Activated CD4-positive, alpha-beta memory T cell treated with anti-CD3 and anti-CD28 coated beads for 36 hours (primary cell): ENCODE measurements at regions of chr7 and their contacts with region 1.

Region 1: DNA sequence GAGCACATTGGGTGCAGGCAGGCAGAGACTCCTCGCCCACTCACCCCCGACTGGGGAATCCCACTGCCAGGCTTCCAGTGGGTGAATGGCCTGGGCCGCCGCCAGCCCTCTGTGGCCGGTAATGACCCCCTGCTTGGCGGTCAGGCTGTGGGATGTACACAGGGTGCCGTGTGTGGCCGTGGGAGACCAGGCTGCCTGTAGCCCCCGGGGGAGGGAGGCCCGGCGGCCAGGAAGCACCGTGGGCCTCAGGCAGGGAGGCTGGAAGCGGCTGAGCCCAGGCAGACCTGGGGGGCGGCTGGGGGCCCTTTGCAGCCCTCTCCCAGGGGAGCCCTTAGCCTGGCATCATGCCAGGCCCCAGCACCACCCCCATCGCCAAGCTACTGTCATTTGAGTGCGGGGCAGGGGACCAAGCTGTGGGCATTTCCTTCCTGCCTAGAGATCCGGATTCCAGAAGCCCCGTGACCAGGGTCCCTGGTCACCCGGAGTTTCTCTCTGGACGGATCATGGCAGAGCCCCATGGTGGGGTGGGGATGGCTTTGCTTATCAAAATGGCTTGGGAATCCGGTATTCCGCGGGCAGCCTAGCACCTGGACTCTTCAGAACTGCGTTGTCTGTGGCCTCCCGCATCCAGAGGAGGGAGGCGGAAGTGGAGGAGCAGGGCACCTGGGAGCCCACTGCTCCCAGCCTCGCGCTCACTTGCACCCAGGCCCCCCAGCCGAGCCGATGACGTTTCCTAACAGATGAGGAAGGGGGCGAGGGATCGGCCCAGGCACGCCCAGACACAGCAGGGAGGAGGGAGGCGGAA is 1.1 kb downstream of the TTYH3 start:
- DNase-seq: peak; percentile 66
- H3K4me3 Mint-ChIP-seq: peak overlapping the region; percentile 87
- H3K27ac Mint-ChIP-seq: peak overlapping the region; percentile 60
- H3K4me1 Mint-ChIP-seq: peaks cover 15% of the 10 kb centered on the region
- H3K27me3 Mint-ChIP-seq: peaks cover 1% of the 10 kb centered on the region

Region 2: DNA sequence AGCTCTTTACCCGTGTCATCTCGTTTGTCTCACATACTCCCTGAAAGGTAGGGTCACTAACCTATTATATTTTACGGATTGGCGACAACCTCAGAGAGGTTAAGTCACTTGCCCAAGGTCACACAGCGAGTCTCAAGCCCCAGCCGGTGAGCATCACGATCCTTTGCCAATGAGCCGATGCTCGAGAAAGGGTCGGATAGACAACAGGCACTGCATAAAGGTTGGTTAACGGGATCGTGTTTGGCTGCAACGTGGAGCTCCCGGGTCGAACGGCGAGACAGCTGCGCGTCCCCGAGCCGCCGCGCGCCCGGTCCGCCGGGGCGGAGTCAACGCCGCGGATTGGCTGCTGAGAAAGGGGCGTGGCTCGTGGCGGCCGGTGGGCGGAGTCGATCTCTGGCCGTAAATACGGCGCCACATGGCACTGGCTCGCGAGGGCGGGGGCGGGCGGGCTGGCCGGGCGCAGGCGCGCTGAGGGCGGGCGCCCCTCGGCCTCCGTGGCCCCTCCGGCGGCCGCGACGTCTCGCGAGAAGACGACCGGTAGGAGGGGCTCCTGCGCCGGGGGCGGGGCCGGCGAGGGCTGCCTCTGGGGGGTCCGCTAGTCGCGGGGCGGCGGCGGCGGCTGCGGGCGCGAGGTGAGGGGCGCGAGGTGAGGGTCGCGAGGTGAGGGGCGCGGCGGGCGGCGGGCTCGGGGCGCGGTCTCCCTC is 229.8 kb before region 1 on chr7 and contains the start of gene CHST12:
- CTCF ChIA-PET with region 1: no interaction called
- POLR2A ChIA-PET with region 1: no interaction called
- intact Hi-C with region 1: loop called (anchors 5 kb)
- DNase-seq: peak; percentile 96
- H3K4me3 Mint-ChIP-seq: peak within 1 kb of the TSS; percentile 79
- H3K27ac Mint-ChIP-seq: no peak within 1 kb of the TSS
- H3K4me1 Mint-ChIP-seq: peaks cover 45% of the 10 kb centered on the region
- H3K27me3 Mint-ChIP-seq: no peaks in the 10 kb centered on the region
- total RNA-seq, gene CHST12: 3.7 to 3.9 TPM

Region 3: GRCh38 chr7:2508327-2509215 is 124.4 kb before region 1 on chr7:
- CTCF ChIA-PET with region 1: no interaction called
- POLR2A ChIA-PET with region 1: no interaction called
- intact Hi-C with region 1: loop called (anchors 5 kb)
- DNase-seq: peak; percentile 84
- H3K4me3 Mint-ChIP-seq: peak overlapping the region; percentile 58
- H3K27ac Mint-ChIP-seq: peak overlapping the region; percentile 79
- H3K4me1 Mint-ChIP-seq: peaks cover 55% of the 10 kb centered on the region
- H3K27me3 Mint-ChIP-seq: no peaks in the 10 kb centered on the region

Region 4: GRCh38 chr7:2529161-2530070 is 103.5 kb before region 1 on chr7:
- CTCF ChIA-PET with region 1: no interaction called
- POLR2A ChIA-PET with region 1: no interaction called
- intact Hi-C with region 1: loop called (anchors 1 kb)
- DNase-seq: peak; percentile 78
- H3K4me3 Mint-ChIP-seq: peak overlapping the region; percentile 63
- H3K27ac Mint-ChIP-seq: peak overlapping the region; percentile 96
- H3K4me1 Mint-ChIP-seq: peaks cover 54% of the 10 kb centered on the region
- H3K27me3 Mint-ChIP-seq: no peaks in the 10 kb centered on the region

Region 5: GRCh38 chr7:2555121-2556052 is 77.5 kb before region 1 on chr7 and contains the start of gene BRAT1:
- CTCF ChIA-PET with region 1: no interaction called
- POLR2A ChIA-PET with region 1: no interaction called
- intact Hi-C with region 1: loop called (anchors 2 kb)
- DNase-seq: peak; percentile 97
- H3K4me3 Mint-ChIP-seq: peak within 1 kb of the TSS; percentile 89
- H3K27ac Mint-ChIP-seq: peak within 1 kb of the TSS; percentile 91
- H3K4me1 Mint-ChIP-seq: peaks cover 40% of the 10 kb centered on the region
- H3K27me3 Mint-ChIP-seq: no peaks in the 10 kb centered on the region
- total RNA-seq, gene BRAT1: 33.5 to 33.6 TPM

Region 6: DNA sequence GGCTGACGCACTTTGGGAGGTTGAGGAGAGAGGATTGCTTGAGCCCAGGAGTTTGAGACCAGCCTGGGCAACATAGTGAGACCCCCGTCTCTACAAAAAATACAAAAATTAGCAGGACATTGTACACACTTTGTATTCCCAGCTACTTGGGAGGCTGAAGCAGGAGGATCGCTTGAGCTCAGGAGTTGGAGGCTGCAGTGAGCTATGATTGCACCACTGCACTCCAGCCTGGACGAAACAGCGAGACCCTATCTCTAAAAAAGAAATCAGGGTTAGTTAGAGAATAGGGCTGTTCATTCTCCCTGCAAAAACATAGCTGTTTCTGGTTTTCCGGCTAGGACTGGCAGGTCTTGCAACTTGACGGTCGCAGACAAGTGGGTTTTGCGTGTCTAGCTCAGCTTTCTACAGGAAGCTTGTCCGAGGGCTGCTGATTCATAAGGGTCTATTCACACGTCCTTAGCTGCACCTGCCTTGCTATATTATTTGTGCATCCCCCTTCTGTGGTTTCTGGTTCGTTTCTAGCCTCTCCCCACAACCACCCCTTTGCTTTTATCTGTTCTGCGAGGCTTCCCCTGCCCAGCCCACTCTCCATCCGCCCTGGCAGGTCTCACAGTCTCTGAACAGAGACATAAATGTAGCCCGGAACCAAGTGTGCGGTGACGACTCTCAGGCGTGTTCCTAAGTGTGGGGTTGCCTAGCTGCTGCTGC is 65.8 kb after region 1 on chr7:
- CTCF ChIA-PET with region 1: no interaction called
- POLR2A ChIA-PET with region 1: no interaction called
- intact Hi-C with region 1: loop called (anchors 5 kb)
- DNase-seq: peak; percentile 79
- H3K4me3 Mint-ChIP-seq: peak overlapping the region; percentile 30
- H3K27ac Mint-ChIP-seq: peak overlapping the region; percentile 40
- H3K4me1 Mint-ChIP-seq: peaks cover 18% of the 10 kb centered on the region
- H3K27me3 Mint-ChIP-seq: no peaks in the 10 kb centered on the region